OCI-LY7 (cell line): ENCODE measurements at regions of chr4 and their contacts with region 1.

Region 1: GRCh38 chr4:42600578-42600977 is 56.3 kb downstream of the ATP8A1 start:
- DNase-seq: peak; percentile 24
- H3K4me3 ChIP-seq: no peak overlapping the region
- H3K27ac ChIP-seq: no peak overlapping the region
- H3K4me1 ChIP-seq: peaks cover 9% of the 10 kb centered on the region
- CTCF ChIP-seq: no peak

Region 2: DNA sequence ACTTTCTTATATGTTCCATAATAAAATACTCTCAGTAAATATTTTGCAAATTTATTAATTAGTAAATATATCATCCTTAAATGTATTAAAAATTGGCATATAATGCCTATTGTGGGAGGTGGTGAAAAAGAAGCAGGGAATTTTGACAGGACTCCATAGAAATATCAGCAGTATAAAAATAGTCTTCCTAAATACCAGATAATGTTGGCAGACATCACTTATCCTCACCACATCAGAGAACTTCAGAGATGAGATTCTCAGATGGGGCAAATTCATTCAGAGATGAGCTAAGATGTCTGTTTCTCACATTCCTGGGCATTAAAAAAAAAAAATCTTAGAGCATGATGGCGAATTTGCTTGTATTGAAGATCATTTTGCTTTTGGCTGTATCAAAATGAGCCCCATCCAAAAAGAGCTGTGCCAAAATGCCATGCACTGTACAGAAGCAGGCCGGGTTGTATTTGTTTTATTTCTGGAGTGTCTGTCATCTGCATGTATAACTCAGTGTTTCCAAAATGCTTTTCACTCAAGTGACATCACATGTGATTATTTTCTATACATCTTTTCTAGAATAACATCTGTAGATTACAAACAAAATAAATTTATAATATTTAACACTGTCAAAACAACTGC is 14.7 kb after region 1 on chr4:
- CTCF ChIA-PET with region 1: interaction called, 3 read pairs
- POLR2A ChIA-PET with region 1: interaction called, 14 read pairs
- intact Hi-C with region 1: no loop called
- DNase-seq: no peak
- H3K4me3 ChIP-seq: no peak overlapping the region
- H3K27ac ChIP-seq: no peak overlapping the region
- H3K4me1 ChIP-seq: no peaks in the 10 kb centered on the region
- CTCF ChIP-seq: no peak